Activated T-helper 1 cell treated with anti-CD3 and anti-CD28 coated beads, Interleukin-12 subunit alpha, Interleukin-12 subunit beta, Interleukin-2, Interleukin-4 antibody, amounts not matched to agents 30 ng/mL and 10 ng/mL and 1 ng/mL, durations not matched to agents 14 hours and 24 hours and 36 hours (primary cell): ENCODE measurements at regions of chr11 and their contacts with region 1.

Region 1: GRCh38 chr11:70202898-70203748 is at the start of gene FADD:
- DNase-seq: peak; percentile 89
- H3K4me3 Mint-ChIP-seq: peak within 1 kb of the TSS; percentile 99
- H3K27ac Mint-ChIP-seq: peak within 1 kb of the TSS; percentile 99
- H3K4me1 Mint-ChIP-seq: peaks cover 37% of the 10 kb centered on the region
- H3K27me3 Mint-ChIP-seq: peaks cover 9% of the 10 kb centered on the region
- total RNA-seq, gene FADD: 47.9 and 51.8 TPM in 2 replicates

Region 2: DNA sequence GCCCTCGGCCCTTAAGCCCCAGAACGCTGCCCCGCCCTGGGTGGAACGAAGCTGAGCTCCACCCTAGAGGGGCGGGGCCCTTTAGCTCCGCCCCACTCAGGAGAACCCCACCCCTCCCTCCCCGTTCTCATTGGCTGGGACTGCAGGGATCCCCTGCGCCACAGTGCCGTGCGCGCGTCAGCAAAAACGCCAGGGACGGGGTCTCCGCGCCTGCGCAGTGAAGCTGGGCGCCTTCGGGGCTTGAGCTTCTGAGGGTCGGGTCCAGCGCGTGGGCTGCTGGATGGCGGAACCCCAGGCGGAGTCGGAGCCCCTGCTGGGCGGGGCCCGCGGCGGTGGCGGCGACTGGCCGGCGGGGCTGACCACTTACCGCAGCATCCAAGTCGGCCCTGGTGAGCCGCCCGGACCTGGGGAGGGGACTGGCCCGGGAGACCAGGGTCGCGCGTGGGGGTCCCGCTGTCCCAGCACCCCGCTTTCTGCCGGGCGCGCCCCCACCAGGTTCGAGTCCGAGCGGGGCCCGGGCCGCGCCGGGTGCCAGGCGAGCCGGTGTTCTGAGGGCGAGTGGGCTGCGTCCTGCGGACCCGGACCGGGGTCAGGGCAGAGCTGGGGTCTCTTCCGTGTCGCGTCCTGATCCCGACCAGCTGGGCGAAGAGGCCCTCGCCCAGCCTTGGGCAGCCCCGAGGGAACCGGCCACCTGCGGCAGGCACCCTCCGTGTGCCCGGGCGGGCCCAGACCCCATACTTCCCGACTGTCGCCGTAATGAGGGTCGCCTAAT is 1154.2 kb before region 1 on chr11 and contains the start of gene TPCN2:
- intact Hi-C with region 1: loop called (anchors 2 kb)
- DNase-seq: peak; percentile 91
- H3K4me3 Mint-ChIP-seq: peak within 1 kb of the TSS; percentile 85
- H3K27ac Mint-ChIP-seq: peak within 1 kb of the TSS; percentile 72
- H3K4me1 Mint-ChIP-seq: peaks cover 14% of the 10 kb centered on the region
- H3K27me3 Mint-ChIP-seq: peaks cover 13% of the 10 kb centered on the region
- total RNA-seq, gene TPCN2: 17.4 and 19.2 TPM in 2 replicates

Region 3: GRCh38 chr11:70005107-70005818 is 197.9 kb before region 1 on chr11:
- intact Hi-C with region 1: loop called (anchors 2 kb)
- DNase-seq: no peak
- H3K4me3 Mint-ChIP-seq: no peak overlapping the region
- H3K27ac Mint-ChIP-seq: no peak overlapping the region
- H3K4me1 Mint-ChIP-seq: peaks cover 14% of the 10 kb centered on the region
- H3K27me3 Mint-ChIP-seq: no peaks in the 10 kb centered on the region

Region 4: DNA sequence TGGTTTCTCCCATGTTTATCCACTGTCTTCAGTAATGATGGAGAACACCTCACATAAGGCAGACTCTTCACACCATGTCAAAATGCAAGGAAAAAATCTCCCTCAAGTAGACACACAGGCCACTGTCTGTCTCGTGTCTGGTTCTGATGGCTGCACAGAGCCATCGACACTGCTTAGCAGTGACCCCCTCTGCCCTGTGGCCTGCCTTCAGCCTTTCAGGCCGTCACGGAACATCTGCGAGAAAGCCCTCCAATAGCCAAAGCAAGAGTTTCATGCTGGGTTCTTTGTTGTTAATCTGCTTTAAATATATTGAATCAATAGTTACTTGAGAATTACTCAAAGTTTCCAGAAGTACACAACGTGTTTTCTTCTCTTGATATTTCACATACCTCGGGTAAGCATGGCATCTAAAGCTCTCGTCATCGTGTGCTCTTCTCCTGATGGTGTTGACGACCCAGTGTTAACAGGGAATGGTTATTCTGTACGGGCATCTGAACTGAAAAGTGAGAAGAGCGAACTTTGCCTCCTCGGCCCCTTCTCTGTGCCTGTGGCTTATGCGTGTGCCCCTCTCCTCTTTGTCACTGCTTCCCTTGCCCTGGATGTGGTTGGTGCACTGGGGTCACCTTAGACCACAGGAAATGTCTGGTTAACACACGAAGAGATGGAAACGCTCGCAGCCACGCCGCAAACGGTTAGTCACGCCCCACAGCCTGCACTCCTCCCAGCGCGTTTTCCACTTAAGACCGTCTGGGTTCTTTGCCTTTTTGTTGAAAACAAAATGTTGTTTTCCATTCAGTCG is 161.8 kb after region 1 on chr11:
- intact Hi-C with region 1: loop called (anchors 1 kb)
- DNase-seq: peak; percentile 60
- H3K4me3 Mint-ChIP-seq: peak overlapping the region; percentile 75
- H3K27ac Mint-ChIP-seq: peak overlapping the region; percentile 97
- H3K4me1 Mint-ChIP-seq: peaks cover 28% of the 10 kb centered on the region
- H3K27me3 Mint-ChIP-seq: no peaks in the 10 kb centered on the region

Region 5: GRCh38 chr11:70511340-70511739 is 308.2 kb after region 1 on chr11:
- intact Hi-C with region 1: no loop called
- DNase-seq: no peak
- H3K4me3 Mint-ChIP-seq: no peak overlapping the region
- H3K27ac Mint-ChIP-seq: no peak overlapping the region
- H3K4me1 Mint-ChIP-seq: no peaks in the 10 kb centered on the region
- H3K27me3 Mint-ChIP-seq: peaks cover 3% of the 10 kb centered on the region

Region 6: GRCh38 chr11:71448257-71449171 is 1245.4 kb after region 1 on chr11 and contains the start of gene DHCR7:
- intact Hi-C with region 1: loop called (anchors 5 kb)
- DNase-seq: peak; percentile 96
- H3K4me3 Mint-ChIP-seq: peak within 1 kb of the TSS; percentile 92
- H3K27ac Mint-ChIP-seq: peak within 1 kb of the TSS; percentile 93
- H3K4me1 Mint-ChIP-seq: peaks cover 62% of the 10 kb centered on the region
- H3K27me3 Mint-ChIP-seq: no peaks in the 10 kb centered on the region
- total RNA-seq, gene DHCR7: 100 and 106 TPM in 2 replicates